Activated CD4-positive, alpha-beta T cell treated with anti-CD3 and anti-CD28 coated beads, Interleukin-2, amount 10 ng/mL, durations not matched to agents 24 days and 14 days (primary cell): ENCODE measurements at regions of chr16 and their contacts with region 1.

Region 1: DNA sequence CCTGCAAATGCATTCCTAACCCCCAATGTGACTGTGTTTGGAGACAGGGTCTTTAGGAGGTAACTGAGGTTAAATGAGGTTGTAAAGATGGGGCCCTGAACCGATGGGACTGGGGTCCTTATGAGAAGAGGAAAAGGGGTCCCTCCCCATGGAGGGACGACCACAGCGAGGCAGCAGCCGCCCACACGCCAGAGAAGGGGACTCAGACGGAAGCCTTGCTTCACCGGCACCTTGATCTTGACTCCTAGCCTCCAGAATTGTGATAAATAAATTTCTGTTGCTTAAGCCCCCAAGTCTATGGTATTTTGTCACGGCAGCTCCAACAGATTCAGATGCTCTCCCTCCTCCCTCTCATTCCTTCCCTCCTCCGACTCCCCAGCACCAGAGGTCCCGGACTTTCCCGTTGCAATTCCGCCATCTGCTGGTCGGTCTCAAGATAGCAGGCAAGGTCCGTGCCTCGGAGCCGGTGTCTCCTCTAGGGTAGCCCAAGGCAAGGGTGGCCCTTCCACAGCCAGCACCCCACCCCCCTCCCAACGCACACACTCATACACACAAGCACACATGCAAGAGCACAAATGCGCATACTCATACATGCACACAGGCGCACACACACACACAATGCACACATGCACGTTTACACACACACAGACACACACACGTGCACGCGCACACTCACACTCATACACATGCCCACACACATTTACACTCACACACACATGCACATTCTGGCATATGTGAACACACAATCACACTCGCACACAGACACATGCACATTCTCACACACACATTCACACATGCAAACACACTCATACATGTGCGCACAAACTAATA is 23.1 kb upstream of the C16orf78 start:
- DNase-seq: peak; percentile 86
- H3K4me3 Mint-ChIP-seq: no peak overlapping the region
- H3K27ac Mint-ChIP-seq: no peak overlapping the region
- H3K4me1 Mint-ChIP-seq: peaks cover 4% of the 10 kb centered on the region
- H3K27me3 Mint-ChIP-seq: peaks cover 2% of the 10 kb centered on the region

Region 2: DNA sequence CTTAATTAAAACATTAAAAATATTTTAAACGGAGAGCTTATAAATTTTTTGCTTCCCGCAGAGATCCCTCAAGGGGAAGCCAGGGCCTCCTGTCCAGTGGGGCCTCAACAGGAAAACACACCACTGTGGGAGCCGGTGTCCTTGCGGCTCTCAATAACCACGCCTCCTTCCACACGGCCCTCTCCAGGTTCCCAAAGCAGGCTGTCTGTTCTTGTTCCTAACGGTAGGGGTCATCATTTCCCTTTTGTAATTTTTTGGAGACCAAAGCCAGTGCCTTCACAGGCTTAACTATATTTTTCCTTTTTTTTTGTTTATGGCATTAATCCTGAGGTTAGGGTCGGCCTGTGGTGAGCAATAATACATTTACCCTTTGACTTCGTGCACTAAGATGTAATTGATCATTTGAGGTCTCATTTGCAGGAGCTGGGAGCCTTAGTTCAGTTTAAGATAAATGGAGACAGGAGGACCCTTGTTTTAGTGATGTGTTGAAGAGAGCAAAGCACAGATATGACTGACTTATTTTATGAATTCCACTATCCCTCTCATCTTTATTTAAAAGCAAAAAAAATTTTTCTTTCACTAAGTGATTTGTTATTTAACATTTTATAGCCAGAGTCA is 663.0 kb before region 1 on chr16:
- intact Hi-C with region 1: loop called (anchors 2 kb)
- DNase-seq: peak; percentile 76
- H3K4me3 Mint-ChIP-seq: no peak overlapping the region
- H3K27ac Mint-ChIP-seq: no peak overlapping the region
- H3K4me1 Mint-ChIP-seq: peaks cover 9% of the 10 kb centered on the region
- H3K27me3 Mint-ChIP-seq: peaks cover 14% of the 10 kb centered on the region